Vagina (tissue), 2 donors: ENCODE measurements at regions of chr11 and their contacts with region 1.

Region 1: GRCh38 chr11:106369224-106369623 is 291.8 kb downstream of the AASDHPPT start:
- DNase-seq: no peak
- H3K4me3 ChIP-seq: no peak overlapping the region
- H3K27ac ChIP-seq: no peak overlapping the region
- H3K4me1 ChIP-seq: no peaks in the 10 kb centered on the region
- H3K27me3 ChIP-seq: no peaks in the 10 kb centered on the region
- CTCF ChIP-seq: no peak
- POLR2A ChIP-seq: no peak

Region 2: GRCh38 chr11:107408762-107409211 is 1039.6 kb after region 1 on chr11:
- intact Hi-C with region 1: loop called (anchors 5 kb)
- DNase-seq: no peak
- H3K4me3 ChIP-seq: no peak overlapping the region
- H3K27ac ChIP-seq: no peak overlapping the region
- H3K4me1 ChIP-seq: no peaks in the 10 kb centered on the region
- H3K27me3 ChIP-seq: no peaks in the 10 kb centered on the region
- CTCF ChIP-seq: no peak
- POLR2A ChIP-seq: no peak